T-cell (primary cell): ENCODE measurements at regions of chr9 and their contacts with region 1.

Region 1: DNA sequence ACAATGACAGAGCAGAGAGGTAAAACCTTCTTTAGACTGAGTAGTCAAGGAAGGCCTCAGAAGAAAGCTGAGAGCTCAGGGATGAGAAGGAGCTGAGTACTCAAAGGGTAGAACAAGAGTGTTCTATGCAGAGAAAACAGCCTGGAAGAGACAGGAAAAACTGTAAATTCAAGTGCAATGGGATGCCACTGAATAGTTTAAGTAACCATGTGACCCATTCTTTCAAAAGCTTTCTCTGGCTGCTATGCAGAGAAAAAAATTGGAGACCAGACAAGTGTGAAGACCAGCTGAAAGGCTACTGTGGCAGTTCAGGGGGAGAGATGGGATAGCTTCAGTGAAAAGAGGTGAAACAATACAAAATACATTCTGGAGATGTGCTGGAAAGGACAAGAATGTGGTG is 61.3 kb upstream of the RNF38 start:
- DNase-seq: no peak
- ATAC-seq: peak in 1 of 4 experiments; percentile 23
- H3K4me3 ChIP-seq: no peak overlapping the region
- H3K4me3 Mint-ChIP-seq: no peak overlapping the region
- H3K27ac ChIP-seq: peak overlapping the region; percentile 16
- H3K27ac Mint-ChIP-seq: peak overlapping the region; percentile 77 to 85
- H3K4me1 ChIP-seq: peaks cover 21 to 28% of the 10 kb centered on the region in 2 experiments
- H3K4me1 Mint-ChIP-seq: peaks cover 62 to 75% (median 70%) of the 10 kb centered on the region in 3 donors
- H3K27me3 ChIP-seq: no peaks in the 10 kb centered on the region
- H3K27me3 Mint-ChIP-seq: no peaks in the 10 kb centered on the region

Region 2: DNA sequence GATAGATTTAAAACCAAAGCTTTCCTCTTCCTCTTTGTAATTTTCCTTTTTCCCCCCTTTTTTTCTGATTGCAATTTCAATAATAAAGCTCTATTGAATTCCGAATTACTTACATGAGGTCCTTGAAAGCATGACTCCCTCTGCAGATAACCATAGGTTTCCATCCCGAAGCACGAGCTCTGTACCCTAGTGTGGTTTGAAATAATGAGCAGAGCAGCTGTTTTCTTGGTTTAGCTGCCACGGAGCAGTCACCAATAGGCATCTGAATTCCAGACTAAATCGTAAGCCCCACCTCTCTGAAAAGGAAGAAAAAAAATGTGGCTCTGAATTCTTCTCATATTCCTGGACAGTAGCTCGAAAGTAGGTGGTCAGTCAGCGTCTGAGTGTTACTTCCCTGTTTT is 184.5 kb before region 1 on chr9:
- CTCF ChIA-PET with region 1: no interaction called
- POLR2A ChIA-PET with region 1: no interaction called
- DNase-seq: no peak
- ATAC-seq: no peak
- H3K4me3 ChIP-seq: no peak overlapping the region
- H3K4me3 Mint-ChIP-seq: no peak overlapping the region
- H3K27ac ChIP-seq: no peak overlapping the region
- H3K27ac Mint-ChIP-seq: no peak overlapping the region
- H3K4me1 ChIP-seq: no peaks in the 10 kb centered on the region
- H3K4me1 Mint-ChIP-seq: no peaks in the 10 kb centered on the region
- H3K27me3 ChIP-seq: no peaks in the 10 kb centered on the region
- H3K27me3 Mint-ChIP-seq: no peaks in the 10 kb centered on the region

Region 3: DNA sequence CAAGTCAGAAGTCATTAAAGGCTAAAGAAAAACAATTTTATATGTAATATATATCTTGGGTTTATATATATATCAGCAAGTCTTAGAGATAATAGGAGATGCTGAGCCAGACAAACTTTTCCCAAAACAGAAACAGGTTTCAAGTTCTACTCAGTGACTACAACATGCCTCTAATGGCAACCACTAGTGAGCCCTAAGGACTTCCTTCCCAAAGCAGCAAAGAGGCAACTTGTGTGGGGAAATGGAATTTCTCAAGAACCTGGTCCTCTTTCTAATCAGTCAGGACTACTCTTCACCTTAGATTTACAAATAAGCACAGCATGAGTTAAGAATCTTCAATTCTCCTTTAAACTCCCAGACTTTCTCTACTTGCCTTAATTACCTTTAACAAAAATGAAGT is 78.8 kb before region 1 on chr9:
- CTCF ChIA-PET with region 1: no interaction called
- POLR2A ChIA-PET with region 1: no interaction called
- DNase-seq: no peak
- ATAC-seq: no peak
- H3K4me3 ChIP-seq: no peak overlapping the region
- H3K4me3 Mint-ChIP-seq: peak overlapping the region; percentile 24 to 70 (median 55)
- H3K27ac ChIP-seq: peak overlapping the region; percentile 0
- H3K27ac Mint-ChIP-seq: peak overlapping the region; percentile 22 to 39
- H3K4me1 ChIP-seq: peaks cover 0 to 11% of the 10 kb centered on the region in 2 experiments
- H3K4me1 Mint-ChIP-seq: peaks cover 74 to 80% (median 76%) of the 10 kb centered on the region in 3 donors
- H3K27me3 ChIP-seq: no peaks in the 10 kb centered on the region
- H3K27me3 Mint-ChIP-seq: no peaks in the 10 kb centered on the region

Region 4: GRCh38 chr9:36441966-36442365 is 19.4 kb before region 1 on chr9:
- CTCF ChIA-PET with region 1: interaction called in 1 of 2 experiments, 10 read pairs
- POLR2A ChIA-PET with region 1: no interaction called
- DNase-seq: peak in 1 of 35 experiments; percentile 33
- ATAC-seq: peak in 3 of 4 experiments; percentile 57 to 75 (median 74)
- H3K4me3 ChIP-seq: no peak overlapping the region
- H3K4me3 Mint-ChIP-seq: no peak overlapping the region
- H3K27ac ChIP-seq: no peak overlapping the region
- H3K27ac Mint-ChIP-seq: no peak overlapping the region
- H3K4me1 ChIP-seq: peaks cover 9 to 24% of the 10 kb centered on the region in 2 experiments
- H3K4me1 Mint-ChIP-seq: peaks cover 66 to 72% (median 68%) of the 10 kb centered on the region in 3 donors
- H3K27me3 ChIP-seq: no peaks in the 10 kb centered on the region
- H3K27me3 Mint-ChIP-seq: no peaks in the 10 kb centered on the region